Activated CD4-positive, alpha-beta T cell treated with anti-CD3 and anti-CD28 coated beads, Interleukin-2, amount 10 ng/mL, durations not matched to agents 24 days and 14 days (primary cell): ENCODE measurements at regions of chrX and their contacts with region 1.

Region 1: GRCh38 chrX:74291964-74292807 is 11.8 kb upstream of the ZCCHC13 start:
- DNase-seq: peak; percentile 92
- H3K4me3 Mint-ChIP-seq: peak overlapping the region; percentile 99
- H3K27ac Mint-ChIP-seq: peak overlapping the region; percentile 100
- H3K4me1 Mint-ChIP-seq: peaks cover 15% of the 10 kb centered on the region
- H3K27me3 Mint-ChIP-seq: no peaks in the 10 kb centered on the region

Region 2: DNA sequence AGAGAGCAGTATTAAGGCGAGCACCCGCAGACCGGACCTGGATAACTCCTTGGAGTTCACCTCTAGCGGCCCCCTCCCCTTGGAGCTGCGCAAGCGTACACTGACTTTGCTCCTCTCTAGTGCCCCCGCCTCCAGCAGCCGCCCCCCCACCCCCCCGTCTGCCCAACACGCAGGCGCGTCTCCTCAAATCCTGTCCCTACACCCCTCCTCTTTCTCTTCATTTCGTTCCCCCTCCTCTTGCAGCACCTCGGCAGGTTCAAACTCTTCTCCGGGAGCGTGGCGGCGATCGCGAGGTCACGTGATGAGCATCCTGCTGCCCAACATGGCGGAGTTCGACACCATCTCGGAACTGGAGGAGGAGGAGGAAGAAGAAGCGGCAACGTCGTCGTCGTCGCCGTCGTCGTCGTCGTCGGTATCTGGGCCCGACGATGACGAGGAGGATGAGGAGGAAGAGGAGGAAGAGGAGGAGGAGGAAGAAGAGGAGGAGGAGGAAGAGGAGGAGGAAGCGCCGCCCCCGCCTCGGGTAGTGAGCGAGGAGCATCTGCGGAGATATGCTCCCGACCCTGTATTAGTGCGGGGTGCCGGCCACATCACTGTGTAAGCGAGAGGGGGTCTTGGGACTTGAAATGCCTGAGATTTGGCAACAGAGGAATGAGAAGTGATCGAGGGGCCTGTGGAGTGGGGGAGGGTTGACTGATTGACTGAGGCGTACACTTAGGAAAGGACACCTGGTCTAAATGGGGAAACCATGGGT is 729.0 kb before region 1 on chrX and contains the start of gene CHIC1:
- intact Hi-C with region 1: loop called (anchors 5 kb)
- DNase-seq: peak; percentile 90
- H3K4me3 Mint-ChIP-seq: peak within 1 kb of the TSS; percentile 88
- H3K27ac Mint-ChIP-seq: peak within 1 kb of the TSS; percentile 92
- H3K4me1 Mint-ChIP-seq: peaks cover 11% of the 10 kb centered on the region
- H3K27me3 Mint-ChIP-seq: no peaks in the 10 kb centered on the region
- total RNA-seq, gene CHIC1: 4.8 and 5.4 TPM in 2 replicates

Region 3: DNA sequence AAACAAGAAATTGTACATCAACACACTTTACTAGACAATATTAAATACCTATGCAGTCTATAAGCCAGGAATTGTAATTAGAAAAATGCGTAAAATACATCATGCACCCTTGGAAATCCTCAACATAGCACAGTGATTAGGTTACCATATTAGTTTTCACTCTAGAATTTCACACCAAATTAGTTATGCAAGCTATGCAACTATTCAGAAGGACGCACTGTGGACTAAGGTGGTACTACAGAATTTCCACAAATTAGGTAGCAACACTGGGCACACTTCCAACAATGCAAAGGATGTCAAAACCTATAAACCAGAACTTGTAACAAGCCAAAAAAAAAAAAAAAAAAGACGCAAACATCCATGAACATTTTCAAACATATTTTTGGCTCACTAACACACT is 59.3 kb before region 1 on chrX:
- intact Hi-C with region 1: no loop called
- DNase-seq: no peak
- H3K4me3 Mint-ChIP-seq: no peak overlapping the region
- H3K27ac Mint-ChIP-seq: no peak overlapping the region
- H3K4me1 Mint-ChIP-seq: no peaks in the 10 kb centered on the region
- H3K27me3 Mint-ChIP-seq: no peaks in the 10 kb centered on the region

Region 4: DNA sequence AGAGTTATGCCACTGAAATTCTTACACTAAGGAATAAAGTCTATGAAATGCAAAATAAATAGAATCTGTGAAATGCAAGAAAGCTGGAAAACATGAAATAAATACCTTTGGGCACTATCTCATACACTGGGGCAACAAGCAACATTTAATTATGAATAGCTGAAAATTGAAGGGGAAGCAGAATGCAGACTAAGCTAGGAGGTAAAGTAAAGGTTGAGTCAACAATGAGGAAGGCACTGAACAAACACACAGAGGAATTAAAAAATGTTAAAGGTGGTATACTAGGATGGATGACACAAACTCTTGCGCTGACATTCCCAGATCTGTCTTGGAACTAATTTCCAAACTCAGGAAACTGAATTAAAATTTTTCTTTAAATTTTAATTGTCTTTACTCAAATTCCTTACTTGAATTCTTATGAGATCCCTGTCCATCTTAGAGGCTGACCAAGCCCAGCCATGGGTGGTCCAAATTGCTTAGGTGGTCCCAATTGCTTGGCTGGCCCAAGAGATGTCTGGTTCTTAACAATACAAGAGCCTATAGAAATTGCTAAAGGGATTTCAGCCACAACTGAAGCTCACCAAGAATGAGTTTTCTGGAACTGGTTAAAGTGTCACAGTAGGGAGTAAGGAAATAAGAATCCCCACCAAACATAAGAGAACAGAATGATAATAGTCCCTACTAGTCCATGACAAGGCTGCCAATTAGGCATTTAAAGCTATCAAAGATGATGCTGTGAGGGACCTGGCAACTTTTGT is 29.6 kb before region 1 on chrX:
- intact Hi-C with region 1: no loop called
- DNase-seq: no peak
- H3K4me3 Mint-ChIP-seq: no peak overlapping the region
- H3K27ac Mint-ChIP-seq: no peak overlapping the region
- H3K4me1 Mint-ChIP-seq: no peaks in the 10 kb centered on the region
- H3K27me3 Mint-ChIP-seq: no peaks in the 10 kb centered on the region

Region 5: DNA sequence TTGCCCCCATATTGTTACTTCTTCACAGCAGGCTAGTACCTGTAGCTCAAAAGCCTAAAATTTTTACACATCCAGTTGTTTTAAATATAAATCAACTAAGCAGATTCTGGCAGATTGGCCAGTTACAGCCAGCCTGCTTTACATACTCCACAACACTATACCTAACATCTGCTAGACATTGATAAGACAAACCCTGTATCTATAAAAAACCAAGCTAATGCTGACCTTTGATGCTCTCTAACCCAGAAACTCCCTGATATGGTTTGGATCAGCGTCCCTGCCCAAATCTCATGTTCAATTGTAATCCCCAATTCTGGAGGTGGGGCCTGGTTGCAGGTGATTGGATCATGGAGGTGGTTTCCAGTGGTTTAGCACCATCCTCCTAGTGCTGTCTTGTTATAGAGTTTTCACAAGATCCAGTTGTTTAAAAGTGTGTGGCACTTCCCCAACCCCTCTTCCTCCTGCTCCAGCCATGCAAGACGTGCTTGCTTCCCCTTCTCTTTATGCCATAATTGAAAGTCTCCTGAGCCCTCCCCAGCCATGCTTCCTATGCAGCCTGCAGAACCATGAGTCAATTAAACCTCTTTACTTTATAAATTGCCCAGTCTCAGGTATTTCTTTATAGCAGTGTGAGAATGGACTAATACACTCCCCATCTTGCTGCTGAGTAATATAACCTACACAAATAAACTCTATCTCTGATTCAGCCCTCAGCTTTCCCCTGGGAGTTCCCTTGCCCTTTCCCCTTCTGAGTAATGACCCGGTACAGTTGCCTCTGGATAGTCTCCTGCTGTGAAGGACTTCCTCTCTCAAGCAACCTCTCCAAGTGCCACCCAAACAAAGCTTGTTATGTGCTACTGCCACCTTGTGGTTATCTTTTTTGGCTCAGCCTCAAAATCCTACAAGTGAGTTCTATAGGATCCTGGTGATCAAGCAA is 51.4 kb after region 1 on chrX:
- intact Hi-C with region 1: loop called (anchors 2 kb)
- DNase-seq: peak; percentile 83
- H3K4me3 Mint-ChIP-seq: no peak overlapping the region
- H3K27ac Mint-ChIP-seq: no peak overlapping the region
- H3K4me1 Mint-ChIP-seq: peaks cover 6% of the 10 kb centered on the region
- H3K27me3 Mint-ChIP-seq: peaks cover 5% of the 10 kb centered on the region

Region 6: DNA sequence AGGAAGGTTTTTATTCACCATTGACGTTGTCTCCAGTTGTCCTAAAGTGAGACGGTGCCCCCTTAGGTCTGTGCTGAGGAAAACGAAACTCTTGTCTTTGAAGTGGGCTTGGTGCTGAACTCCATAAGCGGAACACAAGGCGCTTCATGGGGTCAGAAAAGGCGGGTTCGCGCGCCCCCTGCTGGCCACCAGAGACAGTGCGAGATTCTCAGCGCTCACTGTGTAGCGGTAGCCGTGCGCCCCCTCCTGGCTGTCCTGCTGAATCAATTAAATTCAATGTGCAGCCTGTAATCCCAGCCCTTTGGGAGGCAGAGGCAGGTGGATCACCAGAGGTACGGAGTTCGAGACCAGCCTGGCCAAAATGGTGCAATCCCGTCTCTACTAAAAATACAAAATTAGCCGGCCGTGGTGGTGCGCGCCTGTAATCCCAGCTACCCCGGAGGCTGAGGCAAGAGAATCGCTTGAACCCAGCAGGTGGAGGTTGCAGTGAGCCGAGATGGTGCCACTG is 258.2 kb after region 1 on chrX:
- intact Hi-C with region 1: loop called (anchors 5 kb)
- DNase-seq: peak; percentile 93
- H3K4me3 Mint-ChIP-seq: peak overlapping the region; percentile 53
- H3K27ac Mint-ChIP-seq: peak overlapping the region; percentile 17
- H3K4me1 Mint-ChIP-seq: peaks cover 2% of the 10 kb centered on the region
- H3K27me3 Mint-ChIP-seq: no peaks in the 10 kb centered on the region

Region 7: DNA sequence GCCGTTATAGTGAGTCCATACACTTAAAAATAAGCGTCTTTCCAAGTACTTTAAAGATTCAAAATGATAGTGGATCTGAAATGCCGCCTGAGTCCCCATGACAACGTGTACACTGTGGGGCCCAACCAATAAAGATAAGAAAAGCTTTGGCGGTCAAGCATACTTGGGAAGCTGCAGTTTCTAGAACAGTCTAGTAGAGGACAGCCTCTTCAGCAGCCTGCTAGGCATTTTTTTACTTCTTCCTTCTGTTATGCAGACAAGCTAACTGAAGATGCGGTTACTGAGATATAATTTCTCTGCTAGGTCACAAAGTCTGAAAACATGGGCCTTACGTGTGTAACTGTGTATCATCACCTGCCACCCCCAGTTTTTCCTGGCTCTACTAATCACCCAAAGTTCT is 981.3 kb after region 1 on chrX:
- intact Hi-C with region 1: loop called (anchors 5 kb)
- DNase-seq: no peak
- H3K4me3 Mint-ChIP-seq: peak overlapping the region; percentile 96
- H3K27ac Mint-ChIP-seq: peak overlapping the region; percentile 91
- H3K4me1 Mint-ChIP-seq: peaks cover 26% of the 10 kb centered on the region
- H3K27me3 Mint-ChIP-seq: no peaks in the 10 kb centered on the region